AG04450 (cell line): ENCODE measurements at regions of chr10 and their contacts with region 1.

Region 1: GRCh38 chr10:69914398-69915214 is 112.9 kb downstream of the COL13A1 start:
- DNase-seq: peak; percentile 39
- H3K4me3 ChIP-seq: no peak overlapping the region
- H3K27ac ChIP-seq: no peak overlapping the region
- H3K27me3 ChIP-seq: no peaks in the 10 kb centered on the region
- CTCF ChIP-seq: peak; percentile 87

Region 2: DNA sequence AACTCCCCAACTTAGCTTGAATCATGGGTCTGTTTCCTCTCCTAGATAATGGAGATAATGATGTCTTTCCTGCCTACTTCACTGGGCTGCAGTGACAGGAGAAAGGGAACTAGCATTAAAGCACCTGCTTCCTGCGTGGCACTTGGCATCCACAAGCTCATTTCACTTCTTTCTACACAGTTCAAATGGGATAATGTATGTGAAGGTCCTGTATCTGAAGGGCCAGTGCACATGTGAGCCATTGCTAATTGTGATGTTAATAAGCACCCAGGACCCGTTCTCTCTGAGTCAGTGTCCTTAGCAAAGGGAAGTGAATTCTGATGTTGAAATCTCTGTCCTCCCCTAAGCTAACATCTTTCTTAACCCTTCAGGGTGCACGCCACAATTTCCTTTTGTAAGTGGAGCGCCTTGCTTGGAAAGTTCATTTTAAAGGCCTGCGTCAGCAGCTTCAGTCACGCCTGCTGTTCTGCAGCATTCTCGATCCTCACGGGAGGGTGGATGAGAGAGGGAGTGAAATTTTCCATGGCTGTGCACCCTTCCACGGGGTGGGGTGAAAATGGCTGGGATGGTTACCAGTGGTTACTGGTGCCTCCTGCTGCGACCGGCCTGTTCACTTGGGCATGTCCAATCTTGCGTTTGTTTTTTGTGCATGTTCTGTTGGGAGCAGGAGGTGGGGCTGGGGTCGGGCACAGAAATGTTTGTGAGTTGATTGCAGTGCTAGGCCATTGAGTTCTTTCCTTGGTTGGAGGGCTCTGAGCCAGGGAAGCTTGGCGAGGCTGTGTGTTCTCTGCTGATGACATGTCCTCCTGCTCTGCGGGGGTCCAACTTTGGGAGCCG is 577.1 kb before region 1 on chr10:
- CTCF ChIA-PET with region 1: no interaction called
- POLR2A ChIA-PET with region 1: no interaction called
- DNase-seq: peak; percentile 34
- H3K4me3 ChIP-seq: no peak overlapping the region
- H3K27ac ChIP-seq: peak overlapping the region; percentile 48
- H3K27me3 ChIP-seq: no peaks in the 10 kb centered on the region
- CTCF ChIP-seq: no peak

Region 3: DNA sequence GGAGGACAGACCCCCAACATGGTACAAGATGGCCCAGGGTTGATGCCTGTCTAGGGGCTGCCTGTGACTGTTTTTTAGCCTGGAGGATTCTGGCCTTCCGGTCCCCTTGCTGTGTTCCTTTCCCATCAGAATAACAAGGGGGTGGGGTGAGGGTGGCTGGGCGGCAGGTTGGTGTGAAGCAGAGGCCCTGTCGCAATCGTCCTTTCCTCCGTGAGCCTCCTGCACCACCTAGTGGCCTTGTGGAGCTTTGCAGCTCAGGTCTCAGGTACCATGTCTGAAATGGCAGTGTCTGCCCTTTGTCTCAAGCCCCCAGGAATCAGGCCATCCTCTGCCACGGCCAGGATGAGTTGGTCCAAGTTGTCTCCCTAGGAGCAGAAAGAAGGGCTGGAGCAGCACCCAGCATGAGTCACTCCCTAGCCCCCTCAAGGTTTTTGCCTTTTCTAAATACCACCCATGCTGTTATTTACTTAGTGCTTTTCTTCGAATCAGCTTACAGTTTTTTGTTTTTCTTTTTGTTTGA is 522.1 kb before region 1 on chr10:
- CTCF ChIA-PET with region 1: no interaction called
- POLR2A ChIA-PET with region 1: no interaction called
- DNase-seq: no peak
- H3K4me3 ChIP-seq: no peak overlapping the region
- H3K27ac ChIP-seq: no peak overlapping the region
- H3K27me3 ChIP-seq: no peaks in the 10 kb centered on the region
- CTCF ChIP-seq: peak; percentile 98

Region 4: DNA sequence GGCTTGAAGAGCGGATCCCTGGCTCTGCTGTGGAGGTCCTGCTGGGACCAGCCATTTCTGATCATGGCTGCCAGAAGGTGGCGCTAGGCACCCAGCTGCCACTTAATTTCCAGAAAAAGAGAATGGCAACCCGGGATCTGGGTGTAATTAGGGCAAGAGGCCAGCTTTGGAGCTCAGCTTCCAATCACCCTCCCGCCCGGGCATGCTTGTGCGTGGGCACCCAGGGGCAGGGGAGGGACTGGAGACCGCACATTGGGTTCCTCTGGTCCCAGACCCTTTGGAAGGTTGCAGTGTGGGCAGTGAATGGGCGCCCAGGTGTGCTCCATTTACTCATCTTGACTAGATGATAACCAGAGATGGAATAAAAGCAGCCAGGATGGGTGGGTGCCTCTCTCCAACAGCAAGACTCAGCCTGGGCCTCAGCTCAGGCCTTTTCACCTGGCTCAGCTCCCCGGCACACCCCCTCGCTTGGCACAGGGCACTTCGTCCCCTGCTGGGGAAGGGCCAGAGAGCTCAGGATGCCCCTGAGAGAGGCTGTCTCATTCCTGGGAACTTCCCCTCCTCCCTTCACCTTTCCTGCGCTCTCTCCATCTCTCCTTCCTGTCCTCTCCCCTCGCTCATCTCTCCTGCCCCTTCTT is 269.8 kb before region 1 on chr10:
- CTCF ChIA-PET with region 1: interaction called, 61 read pairs
- POLR2A ChIA-PET with region 1: no interaction called
- DNase-seq: peak; percentile 20
- H3K4me3 ChIP-seq: no peak overlapping the region
- H3K27ac ChIP-seq: no peak overlapping the region
- H3K27me3 ChIP-seq: peaks cover 51% of the 10 kb centered on the region
- CTCF ChIP-seq: peak; percentile 87

Region 5: DNA sequence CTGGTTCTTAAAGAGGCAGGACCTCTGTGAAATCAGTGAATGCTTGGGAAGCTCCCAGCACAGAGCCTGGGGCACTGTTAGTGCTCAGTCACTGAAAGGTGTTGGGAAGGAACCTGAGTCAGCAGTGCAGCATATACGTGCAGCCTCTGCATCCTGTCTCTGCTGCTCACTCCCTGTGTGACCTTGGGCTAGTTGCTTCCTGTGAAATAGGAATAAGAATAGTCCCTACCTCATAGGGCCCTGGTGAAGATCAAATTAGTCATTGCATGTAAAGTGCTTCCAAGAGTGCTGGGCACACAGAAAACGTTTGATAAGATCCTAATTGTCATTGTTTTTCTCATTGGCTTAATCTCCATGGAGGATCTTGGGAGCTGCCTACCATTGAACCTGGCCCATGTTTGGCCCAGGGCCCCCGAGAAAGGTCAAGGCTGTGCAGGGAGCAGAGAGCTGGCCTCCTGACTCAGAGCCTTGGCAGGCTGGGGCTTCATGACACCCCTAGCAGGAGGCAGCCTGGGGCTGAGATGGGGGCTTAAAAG is 186.2 kb before region 1 on chr10:
- CTCF ChIA-PET with region 1: interaction called, 14 read pairs
- POLR2A ChIA-PET with region 1: no interaction called
- DNase-seq: no peak
- H3K4me3 ChIP-seq: no peak overlapping the region
- H3K27ac ChIP-seq: no peak overlapping the region
- H3K27me3 ChIP-seq: peaks cover 11% of the 10 kb centered on the region
- CTCF ChIP-seq: no peak

Region 6: GRCh38 chr10:69800109-69800508 is 114.5 kb before region 1 on chr10:
- CTCF ChIA-PET with region 1: interaction called, 29 read pairs
- POLR2A ChIA-PET with region 1: no interaction called
- DNase-seq: peak; percentile 57
- H3K4me3 ChIP-seq: no peak overlapping the region
- H3K27ac ChIP-seq: no peak overlapping the region
- H3K27me3 ChIP-seq: peaks cover 14% of the 10 kb centered on the region
- CTCF ChIP-seq: peak; percentile 94

Region 7: DNA sequence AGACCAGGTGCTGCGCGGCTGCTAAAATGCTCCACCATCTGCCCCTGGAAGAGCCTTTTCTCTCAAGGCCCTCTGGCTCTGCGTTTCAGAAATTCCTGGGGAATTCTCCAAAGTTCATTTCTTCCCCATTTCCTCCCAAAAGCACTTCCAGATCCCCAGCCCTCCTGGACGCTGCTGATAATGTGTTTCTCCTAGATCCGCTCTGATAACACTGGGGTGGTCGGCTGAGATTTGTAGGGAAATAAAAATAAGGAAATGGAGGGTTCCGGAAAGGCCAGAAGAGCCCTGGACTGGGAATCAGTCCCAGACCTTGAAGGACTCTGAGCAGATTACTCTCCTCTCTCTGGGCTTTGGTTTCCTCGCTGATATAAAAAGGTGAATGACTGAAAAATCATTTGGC is 84.8 kb before region 1 on chr10:
- CTCF ChIA-PET with region 1: no interaction called
- POLR2A ChIA-PET with region 1: no interaction called
- DNase-seq: no peak
- H3K4me3 ChIP-seq: no peak overlapping the region
- H3K27ac ChIP-seq: no peak overlapping the region
- H3K27me3 ChIP-seq: no peaks in the 10 kb centered on the region
- CTCF ChIP-seq: no peak

Region 8: DNA sequence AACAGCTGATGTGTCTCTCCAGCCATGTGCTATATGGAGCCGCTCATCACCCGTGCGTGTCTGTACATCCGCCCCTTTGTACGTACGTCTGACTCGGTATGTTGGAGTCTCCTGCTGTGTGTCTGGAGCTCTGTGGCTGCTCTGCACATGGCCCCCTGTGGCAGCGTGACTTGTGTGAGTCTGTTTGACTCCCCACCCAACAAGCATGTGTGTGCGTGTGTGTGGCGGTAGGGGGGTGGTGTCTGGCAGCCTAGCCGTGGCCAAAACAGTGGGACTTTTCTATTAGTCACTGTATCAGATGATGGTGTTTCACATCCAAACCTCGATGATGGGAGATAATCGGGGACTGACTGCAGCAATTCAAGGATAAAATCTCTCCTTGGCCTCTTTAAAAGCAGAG is 18.8 kb before region 1 on chr10:
- CTCF ChIA-PET with region 1: interaction called, 32 read pairs
- POLR2A ChIA-PET with region 1: no interaction called
- DNase-seq: peak; percentile 20
- H3K4me3 ChIP-seq: no peak overlapping the region
- H3K27ac ChIP-seq: peak overlapping the region; percentile 65
- H3K27me3 ChIP-seq: no peaks in the 10 kb centered on the region
- CTCF ChIP-seq: no peak

Region 9: DNA sequence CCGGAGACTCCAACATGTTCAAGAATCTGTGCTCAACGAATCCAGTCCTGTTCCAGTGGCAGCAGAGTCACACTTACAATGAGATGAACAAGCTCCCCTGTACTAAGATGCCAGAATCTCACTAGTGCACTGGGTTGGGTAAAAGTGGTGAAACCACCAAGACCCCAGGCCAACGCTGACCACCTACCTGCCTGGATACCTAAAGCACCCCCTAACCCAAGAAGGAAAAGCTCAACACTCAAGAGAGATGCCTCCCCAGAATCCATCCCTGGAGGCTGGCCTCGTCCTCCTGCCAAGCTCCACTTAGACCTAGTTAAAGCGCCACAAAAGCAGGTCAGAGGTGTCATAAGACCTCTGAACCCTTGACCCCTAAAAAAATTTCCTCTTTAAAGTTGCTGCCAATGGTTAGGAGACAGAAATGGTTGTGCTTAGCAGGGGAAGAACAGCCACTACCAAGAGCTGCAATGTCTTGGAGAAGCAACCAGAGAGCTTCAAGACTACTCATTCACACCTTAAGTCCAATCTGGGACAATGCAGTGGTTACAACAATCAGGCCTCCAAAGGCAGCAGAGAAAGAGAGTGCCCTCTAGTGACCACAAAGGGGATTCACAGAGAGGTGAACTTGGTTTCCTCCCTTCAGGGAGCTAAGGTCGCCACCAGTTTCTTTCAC is 43.4 kb after region 1 on chr10:
- CTCF ChIA-PET with region 1: interaction called, 16 read pairs
- POLR2A ChIA-PET with region 1: no interaction called
- DNase-seq: no peak
- H3K4me3 ChIP-seq: no peak overlapping the region
- H3K27ac ChIP-seq: no peak overlapping the region
- H3K27me3 ChIP-seq: no peaks in the 10 kb centered on the region
- CTCF ChIP-seq: peak; percentile 89